Heart right ventricle (tissue), 16 donors: ENCODE measurements at regions of chr15 and their contacts with region 1.

Region 1: GRCh38 chr15:74545880-74546656 is 5.0 kb downstream of the ARID3B start:
- DNase-seq: peak; percentile 97 to 99
- ATAC-seq: peak; percentile 95 to 98 (median 96)
- H3K4me3 ChIP-seq: peak overlapping the region in 2 of 10 donors; percentile 1 to 7
- H3K27ac ChIP-seq: peak overlapping the region in 2 of 10 donors; percentile 23 to 46
- H3K4me1 ChIP-seq: peaks cover 6 to 72% (median 35%) of the 10 kb centered on the region in 9 donors
- H3K27me3 ChIP-seq: no peaks in the 10 kb centered on the region
- CTCF ChIP-seq: no peak

Region 2: GRCh38 chr15:74460871-74461846 is 84.9 kb before region 1 on chr15 and contains the start of gene UBL7:
- intact Hi-C with region 1: loop called in 5 of 10 experiments (anchors 2 to 5 kb)
- DNase-seq: peak; percentile 95 to 98
- ATAC-seq: peak; percentile 99 to 100 (median 99)
- H3K4me3 ChIP-seq: peak within 1 kb of the TSS; percentile 48 to 95 (median 72)
- H3K27ac ChIP-seq: peak within 1 kb of the TSS; percentile 54 to 92 (median 86)
- H3K4me1 ChIP-seq: peaks cover 0 to 25% (median 18%) of the 10 kb centered on the region in 9 donors
- H3K27me3 ChIP-seq: no peaks in the 10 kb centered on the region
- CTCF ChIP-seq: peak in 5 of 9 donors; percentile 14 to 48 (median 45)
- total RNA-seq, gene UBL7: 49.1 to 56.6 (median 52.7) TPM

Region 3: GRCh38 chr15:74873036-74873755 is 327.1 kb after region 1 on chr15 and contains the start of gene SCAMP2:
- intact Hi-C with region 1: no loop called
- DNase-seq: peak; percentile 93 to 96
- ATAC-seq: peak; percentile 94 to 97 (median 96)
- H3K4me3 ChIP-seq: peak within 1 kb of the TSS; percentile 57 to 94 (median 68)
- H3K27ac ChIP-seq: peak within 1 kb of the TSS; percentile 62 to 97 (median 94)
- H3K4me1 ChIP-seq: peaks cover 12 to 53% (median 50%) of the 10 kb centered on the region in 9 donors
- H3K27me3 ChIP-seq: no peaks in the 10 kb centered on the region
- CTCF ChIP-seq: no peak
- total RNA-seq, gene SCAMP2: 28.0 to 64.3 (median 39.1) TPM